H1 (cell line): ENCODE measurements at regions of chr6 and their contacts with region 1.

Region 1: GRCh38 chr6:30722280-30723112 is 2.3 kb downstream of the TUBB start:
- DNase-seq: peak in 1 of 2 experiments; percentile 92
- H3K4me3 ChIP-seq: peak overlapping the region; percentile 96 to 100 (median 96); a peak in 7 of 8 replicates
- H3K27ac ChIP-seq: no peak overlapping the region
- H3K4me1 ChIP-seq: peaks cover 0 to 4% (median 1%) of the 10 kb centered on the region in 4 experiments; a peak in 4 of 7 replicates
- H3K27me3 ChIP-seq: no peaks in the 10 kb centered on the region
- CTCF ChIP-seq: peak; percentile 85 to 88 (median 87)
- EP300 ChIP-seq: no peak
- POLR2A ChIP-seq: peak; percentile 61 to 77; a peak in 2 of 3 replicates
- RAD21 ChIP-seq: peak; percentile 71 to 80

Region 2: DNA sequence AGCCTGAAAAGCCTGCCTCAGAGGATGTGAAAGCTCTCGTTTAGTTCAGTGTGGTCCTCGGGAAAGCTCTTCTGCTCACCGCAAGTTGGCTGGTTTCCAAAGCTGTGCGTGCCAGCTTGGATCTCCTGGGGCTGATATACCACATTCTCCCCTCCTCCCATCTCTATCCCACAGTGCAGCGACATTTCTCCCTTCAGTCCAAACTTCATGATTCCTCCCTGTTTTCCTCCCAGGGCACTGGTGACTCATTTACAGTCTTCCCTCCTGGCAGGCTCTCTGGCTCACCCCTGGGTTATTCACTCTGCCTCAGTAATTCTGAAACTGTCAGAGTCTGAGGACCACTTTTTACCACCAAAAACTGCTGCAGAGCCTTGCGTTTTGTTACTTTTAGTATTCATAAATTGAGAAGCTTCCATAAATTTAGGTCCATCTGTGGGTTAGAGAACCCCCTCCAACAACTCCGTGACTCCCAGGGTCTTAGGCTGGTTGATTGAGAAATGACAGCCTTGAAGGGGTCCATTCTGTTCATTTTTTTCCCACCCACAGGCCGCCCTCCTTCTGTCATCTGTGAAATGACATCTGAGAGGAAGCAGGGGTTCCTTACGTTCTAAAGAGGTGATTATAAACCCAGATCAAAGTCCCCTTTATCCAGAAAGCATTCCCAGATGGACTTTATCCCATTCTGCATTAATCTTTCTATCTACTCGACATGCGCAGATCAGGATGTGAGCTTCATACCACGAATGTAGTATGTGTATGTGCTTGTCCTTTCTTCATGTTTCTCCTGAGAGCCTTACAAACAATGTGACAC is 567.6 kb before region 1 on chr6:
- CTCF ChIA-PET with region 1: no interaction called
- POLR2A ChIA-PET with region 1: no interaction called
- DNase-seq: no peak
- H3K4me3 ChIP-seq: no peak overlapping the region
- H3K27ac ChIP-seq: no peak overlapping the region
- H3K4me1 ChIP-seq: no peaks in the 10 kb centered on the region
- H3K27me3 ChIP-seq: peaks cover 0 to 4% (median 1%) of the 10 kb centered on the region in 4 experiments; a peak in 4 of 7 replicates
- CTCF ChIP-seq: no peak
- EP300 ChIP-seq: no peak
- POLR2A ChIP-seq: no peak
- RAD21 ChIP-seq: no peak

Region 3: DNA sequence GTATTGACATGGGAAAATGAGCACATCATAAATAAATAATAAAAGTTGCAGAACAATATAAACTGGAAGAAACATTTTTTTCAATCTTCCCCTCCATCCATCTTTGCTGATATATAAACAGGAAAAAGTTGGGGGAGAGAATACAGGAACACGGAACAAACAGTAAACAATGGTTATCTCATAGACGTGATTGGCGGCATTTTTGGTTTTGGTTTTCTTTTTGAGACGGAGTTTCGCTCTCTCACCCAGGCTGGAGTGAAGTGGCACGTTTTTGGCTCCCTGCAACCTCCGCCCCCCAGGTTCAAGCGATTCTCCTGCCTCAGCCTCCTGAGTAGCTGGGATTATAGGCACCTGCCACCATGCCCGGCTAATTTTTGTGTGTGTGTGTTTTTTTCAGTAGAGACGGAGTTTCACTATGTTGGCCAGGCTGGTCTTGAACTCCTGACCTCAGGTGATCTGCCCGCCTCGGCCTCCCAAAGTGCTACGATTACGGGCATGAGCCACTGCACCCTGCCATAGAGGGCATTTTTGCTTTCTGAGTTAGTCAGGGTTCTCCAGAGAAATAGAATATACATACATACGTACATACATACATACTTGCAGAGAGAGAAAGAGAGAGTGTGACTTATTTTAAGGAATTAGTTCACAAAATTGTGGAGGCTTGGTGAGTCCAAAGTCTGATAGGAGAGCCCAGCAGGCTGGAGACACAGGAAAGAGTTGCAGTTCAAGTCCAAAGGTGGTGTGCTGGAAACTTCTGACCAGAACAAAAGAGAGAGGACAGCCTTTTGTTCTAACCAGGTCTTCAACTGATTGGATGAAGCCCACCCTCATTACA is 188.8 kb before region 1 on chr6:
- CTCF ChIA-PET with region 1: no interaction called
- POLR2A ChIA-PET with region 1: no interaction called
- DNase-seq: no peak
- H3K4me3 ChIP-seq: no peak overlapping the region
- H3K27ac ChIP-seq: no peak overlapping the region
- H3K4me1 ChIP-seq: no peaks in the 10 kb centered on the region
- H3K27me3 ChIP-seq: no peaks in the 10 kb centered on the region
- CTCF ChIP-seq: no peak
- EP300 ChIP-seq: no peak
- POLR2A ChIP-seq: no peak
- RAD21 ChIP-seq: no peak

Region 4: DNA sequence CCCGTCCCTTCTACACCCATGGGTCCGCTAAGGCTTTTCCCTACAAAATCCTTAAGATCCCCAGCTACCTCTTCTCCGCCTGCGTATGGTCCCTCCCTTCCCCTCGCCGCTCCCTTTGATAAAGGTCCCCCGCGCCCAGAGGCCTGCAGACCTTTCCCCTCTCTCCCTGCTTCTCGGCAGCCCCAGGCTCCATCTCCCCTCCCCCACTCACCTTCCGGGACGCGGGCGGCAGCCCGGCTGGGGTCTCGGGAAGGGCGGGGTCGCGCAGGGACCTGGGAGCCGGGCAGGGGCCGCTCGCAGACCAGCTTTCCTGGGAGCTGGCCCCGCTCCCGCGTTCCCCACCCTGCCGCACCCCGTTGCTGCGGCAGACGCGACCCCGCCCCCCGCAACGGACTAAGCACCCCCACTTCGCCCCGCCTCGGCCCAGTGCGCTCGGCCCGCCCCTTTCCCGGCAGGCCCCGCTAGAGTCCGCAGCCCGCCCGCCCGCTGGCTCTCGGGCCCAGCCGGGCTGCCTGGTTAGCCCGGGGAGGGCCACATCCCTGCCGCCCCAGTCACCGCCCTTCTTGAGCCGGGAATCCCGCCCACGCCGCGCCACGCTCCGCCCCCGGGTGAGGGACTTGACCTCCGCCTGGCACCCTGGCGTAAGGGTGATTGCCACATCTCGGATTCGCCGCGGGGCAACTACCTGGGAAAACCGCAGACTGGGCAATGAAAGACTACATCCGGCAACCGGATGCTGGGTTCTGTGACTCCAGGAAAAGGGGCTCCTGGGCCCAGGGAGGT is 20.0 kb after region 1 on chr6 and contains the start of gene FLOT1:
- CTCF ChIA-PET with region 1: interaction called, 26 read pairs
- POLR2A ChIA-PET with region 1: interaction called, 337 read pairs
- DNase-seq: peak; percentile 87 to 97
- H3K4me3 ChIP-seq: peak within 1 kb of the TSS; percentile 76 to 95 (median 88)
- H3K27ac ChIP-seq: peak within 1 kb of the TSS; percentile 54; the same call in 1 of the 2 replicates
- H3K4me1 ChIP-seq: peaks cover 3 to 18% (median 7%) of the 10 kb centered on the region in 4 experiments; a peak in 6 of 7 replicates
- H3K27me3 ChIP-seq: no peaks in the 10 kb centered on the region; a peak in 1 of 7 replicates
- CTCF ChIP-seq: no peak
- EP300 ChIP-seq: no peak
- POLR2A ChIP-seq: peak; percentile 24 to 47
- RAD21 ChIP-seq: peak; percentile 2 to 4; a peak in 2 of 4 replicates
- total RNA-seq, gene FLOT1: 85.4 and 87.5 TPM in 2 replicates

Region 5: DNA sequence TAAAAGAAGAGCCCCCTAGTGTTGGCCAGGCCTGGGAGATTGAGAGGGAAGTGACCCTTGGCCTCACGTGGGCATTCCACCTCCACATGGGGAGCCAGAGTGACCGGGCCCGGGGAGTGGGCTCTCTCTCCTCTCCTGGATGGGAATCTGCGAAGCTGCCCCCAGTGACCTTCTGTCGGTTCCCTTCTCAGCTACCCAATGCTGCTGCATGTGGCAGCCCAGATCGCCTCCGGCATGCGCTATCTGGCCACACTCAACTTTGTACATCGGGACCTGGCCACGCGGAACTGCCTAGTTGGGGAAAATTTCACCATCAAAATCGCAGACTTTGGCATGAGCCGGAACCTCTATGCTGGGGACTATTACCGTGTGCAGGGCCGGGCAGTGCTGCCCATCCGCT is 175.4 kb after region 1 on chr6:
- CTCF ChIA-PET with region 1: no interaction called
- POLR2A ChIA-PET with region 1: no interaction called
- DNase-seq: no peak
- H3K4me3 ChIP-seq: no peak overlapping the region
- H3K27ac ChIP-seq: no peak overlapping the region
- H3K4me1 ChIP-seq: no peaks in the 10 kb centered on the region
- H3K27me3 ChIP-seq: no peaks in the 10 kb centered on the region
- CTCF ChIP-seq: no peak
- EP300 ChIP-seq: no peak
- POLR2A ChIP-seq: no peak
- RAD21 ChIP-seq: no peak